ENCODE measurements at regions of chr10 and their contacts with region 1.

Region 1: GRCh38 chr10:1048732-1049424 is at the start of gene IDI1:
- DNase-seq: peak; percentile 98
- ATAC-seq: peak; percentile 86
- H3K4me3 Mint-ChIP-seq: peak within 1 kb of the TSS; percentile 94
- H3K27ac Mint-ChIP-seq: peak within 1 kb of the TSS; percentile 99
- H3K4me1 Mint-ChIP-seq: peaks cover 66% of the 10 kb centered on the region
- H3K27me3 Mint-ChIP-seq: no peaks in the 10 kb centered on the region
- total RNA-seq, gene IDI1: 64.7 to 65.3 TPM

Region 2: GRCh38 chr10:1036341-1036791 is 12.5 kb before region 1 on chr10:
- CTCF ChIA-PET with region 1: no interaction called
- POLR2A ChIA-PET with region 1: interaction called, 15 read pairs
- DNase-seq: no peak
- ATAC-seq: peak; percentile 28
- H3K4me3 Mint-ChIP-seq: no peak overlapping the region
- H3K27ac Mint-ChIP-seq: no peak overlapping the region
- H3K4me1 Mint-ChIP-seq: peaks cover 8% of the 10 kb centered on the region
- H3K27me3 Mint-ChIP-seq: no peaks in the 10 kb centered on the region

Measured in activated CD8-positive, alpha-beta T cell treated with anti-CD3 and anti-CD28 coated beads, Interleukin-2, amount 10 ng/mL, durations not matched to agents 7 days and 5 days (primary cell).